Uterus (tissue), 4 donors: ENCODE measurements at regions of chr12 and their contacts with region 1.

Region 1: DNA sequence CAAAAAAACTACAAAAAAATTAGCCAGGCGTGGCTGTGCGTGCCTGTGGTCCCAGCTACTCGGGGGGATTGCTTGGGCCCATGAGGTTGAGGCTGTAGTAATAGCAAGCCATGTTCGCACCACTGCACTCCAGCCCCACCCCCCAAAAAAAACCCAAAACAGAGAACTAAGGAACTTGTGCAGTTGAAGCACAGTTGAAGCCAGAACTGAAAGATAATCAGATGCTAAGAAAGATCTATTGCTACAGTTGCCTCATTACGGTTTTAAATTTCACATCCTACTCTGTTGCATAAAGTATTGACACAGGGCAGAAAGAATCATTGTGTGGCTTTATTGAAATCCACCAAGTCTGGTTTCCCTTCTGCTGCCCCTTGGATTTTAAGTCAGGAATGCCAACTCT is 3.8 kb downstream of the CS start:
- DNase-seq: no peak
- H3K4me3 ChIP-seq: no peak overlapping the region
- H3K27ac ChIP-seq: no peak overlapping the region
- H3K4me1 ChIP-seq: peaks cover 0 to 8% of the 10 kb centered on the region in 2 donors
- H3K27me3 ChIP-seq: no peaks in the 10 kb centered on the region
- CTCF ChIP-seq: no peak
- POLR2A ChIP-seq: no peak

Region 2: DNA sequence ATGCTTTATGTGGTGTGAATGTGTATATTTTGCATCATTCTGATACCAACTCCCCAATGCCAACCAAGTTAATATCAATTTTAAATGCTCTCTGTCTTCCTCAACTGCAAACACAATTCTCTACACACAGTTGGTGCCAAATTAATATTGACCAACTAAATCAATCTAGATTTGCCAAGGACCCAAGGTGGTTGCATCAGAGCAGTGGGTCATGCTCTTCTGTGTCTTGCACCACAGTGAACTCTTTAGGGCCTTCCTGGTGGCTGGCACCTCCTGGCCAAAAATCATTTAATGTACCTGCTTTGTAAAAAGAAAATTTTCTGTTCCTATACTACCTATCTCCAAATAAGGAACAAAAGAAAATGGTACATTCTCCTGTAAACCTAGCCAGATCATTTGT is 15.4 kb before region 1 on chr12:
- intact Hi-C with region 1: loop called (anchors 1 kb)
- DNase-seq: no peak
- H3K4me3 ChIP-seq: no peak overlapping the region
- H3K27ac ChIP-seq: no peak overlapping the region
- H3K4me1 ChIP-seq: no peaks in the 10 kb centered on the region
- H3K27me3 ChIP-seq: no peaks in the 10 kb centered on the region
- CTCF ChIP-seq: no peak
- POLR2A ChIP-seq: no peak

Region 3: DNA sequence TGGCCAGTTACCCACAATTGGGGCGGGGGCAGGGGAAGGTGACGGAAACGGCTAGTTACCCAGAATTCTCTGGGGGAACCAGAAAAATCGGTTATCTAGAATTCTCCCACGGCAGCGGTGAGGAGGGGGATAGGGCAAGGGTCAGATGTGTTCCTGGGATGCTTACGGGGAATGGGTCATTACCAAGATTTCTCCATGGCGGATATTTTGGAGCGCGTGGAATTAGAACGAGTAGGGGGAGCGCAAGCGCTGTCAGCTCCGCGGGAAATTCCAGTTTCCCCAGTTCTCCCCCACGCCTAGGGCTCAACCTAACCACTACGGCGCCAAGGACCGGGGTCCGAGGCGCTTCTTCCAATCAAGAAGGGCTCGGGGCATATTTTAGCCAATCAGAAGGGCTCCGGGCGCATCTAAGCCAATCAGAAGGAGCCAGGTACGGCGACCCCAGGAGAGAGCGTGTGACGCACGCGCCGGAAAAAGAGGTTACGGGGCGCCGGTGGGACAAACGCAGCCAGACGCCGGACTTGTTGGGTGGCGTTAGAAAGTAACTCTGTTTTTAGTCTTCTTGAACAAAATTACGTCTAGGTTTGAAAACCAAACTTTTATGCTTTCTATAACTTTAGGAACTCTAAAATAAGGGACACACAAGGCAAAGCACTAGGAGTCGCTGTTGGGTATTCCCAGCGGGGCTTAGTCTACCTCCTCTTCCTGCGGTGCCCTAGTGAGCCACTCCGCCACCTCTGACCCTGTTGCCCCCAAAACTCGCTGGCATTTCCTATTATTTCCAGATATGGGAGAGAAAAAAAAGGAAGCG is 37.6 kb after region 1 on chr12 and contains the start of gene PAN2:
- intact Hi-C with region 1: no loop called
- DNase-seq: peak; percentile 94 to 96
- H3K4me3 ChIP-seq: peak within 1 kb of the TSS; percentile 68 to 86
- H3K27ac ChIP-seq: peak within 1 kb of the TSS; percentile 98
- H3K4me1 ChIP-seq: no peaks in the 10 kb centered on the region
- H3K27me3 ChIP-seq: no peaks in the 10 kb centered on the region
- CTCF ChIP-seq: peak; percentile 42 to 67 (median 53)
- POLR2A ChIP-seq: peak; percentile 69 to 80
- total RNA-seq, gene PAN2: 33.2 to 104 (median 50.6) TPM